OCI-LY7 (cell line): ENCODE measurements at regions of chr5 and their contacts with region 1.

Region 1: GRCh38 chr5:156991714-156992113 is 28.7 kb upstream of the TIMD4 start:
- DNase-seq: no peak
- H3K4me3 ChIP-seq: no peak overlapping the region
- H3K27ac ChIP-seq: no peak overlapping the region
- H3K4me1 ChIP-seq: peaks cover 2% of the 10 kb centered on the region
- CTCF ChIP-seq: no peak

Region 2: GRCh38 chr5:156879665-156880285 is 111.9 kb before region 1 on chr5:
- CTCF ChIA-PET with region 1: no interaction called
- POLR2A ChIA-PET with region 1: no interaction called
- intact Hi-C with region 1: no loop called
- DNase-seq: peak; percentile 89
- H3K4me3 ChIP-seq: peak overlapping the region; percentile 11
- H3K27ac ChIP-seq: peak overlapping the region; percentile 98
- H3K4me1 ChIP-seq: peaks cover 72% of the 10 kb centered on the region
- CTCF ChIP-seq: peak; percentile 47

Region 3: DNA sequence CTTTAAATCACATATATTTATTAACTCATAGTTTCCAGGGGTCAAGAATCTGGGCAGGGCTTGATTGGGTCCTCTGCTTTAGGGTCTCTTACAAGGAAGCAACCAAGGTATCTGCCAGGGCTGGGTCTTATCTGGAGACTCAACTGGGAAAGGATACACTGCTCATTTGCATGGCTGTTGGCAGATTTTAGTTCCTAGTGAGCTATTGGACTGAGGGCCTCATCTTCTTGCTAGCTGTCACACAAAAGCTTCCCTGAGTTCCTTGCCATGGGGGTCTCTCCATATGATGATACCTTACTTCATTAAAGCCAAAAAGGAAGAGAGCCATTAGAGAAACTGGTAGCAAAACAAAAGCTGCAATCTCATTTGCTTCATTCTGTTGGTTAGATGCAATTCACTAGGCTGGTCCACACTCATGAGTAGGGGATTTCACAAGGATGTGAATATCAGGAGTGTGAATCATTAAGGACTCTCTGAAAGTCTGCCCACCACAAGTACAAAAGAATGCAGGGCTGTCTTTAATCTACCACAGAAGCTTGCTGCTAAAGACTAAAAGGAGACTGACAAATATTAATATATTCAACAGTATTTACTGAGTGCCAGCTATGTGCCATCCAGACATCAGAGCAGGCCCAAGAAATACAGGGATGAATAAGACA is 13.3 kb after region 1 on chr5:
- CTCF ChIA-PET with region 1: no interaction called
- POLR2A ChIA-PET with region 1: interaction called, 10 read pairs
- intact Hi-C with region 1: no loop called
- DNase-seq: no peak
- H3K4me3 ChIP-seq: no peak overlapping the region
- H3K27ac ChIP-seq: no peak overlapping the region
- H3K4me1 ChIP-seq: no peaks in the 10 kb centered on the region
- CTCF ChIP-seq: no peak